Activated CD8-positive, alpha-beta memory T cell treated with anti-CD3 and anti-CD28 coated beads, Interleukin-2, amount 10 ng/mL, durations not matched to agents 7 days and 5 days (primary cell): ENCODE measurements at regions of chr2 and their contacts with region 1.

Region 1: GRCh38 chr2:7437716-7438632 is 520.8 kb downstream of the RNF144A start:
- DNase-seq: peak; percentile 70
- ATAC-seq: peak; percentile 48
- H3K4me3 Mint-ChIP-seq: peak overlapping the region; percentile 57
- H3K27ac Mint-ChIP-seq: peak overlapping the region; percentile 97
- H3K4me1 Mint-ChIP-seq: peaks cover 81% of the 10 kb centered on the region
- H3K27me3 Mint-ChIP-seq: no peaks in the 10 kb centered on the region

Region 2: DNA sequence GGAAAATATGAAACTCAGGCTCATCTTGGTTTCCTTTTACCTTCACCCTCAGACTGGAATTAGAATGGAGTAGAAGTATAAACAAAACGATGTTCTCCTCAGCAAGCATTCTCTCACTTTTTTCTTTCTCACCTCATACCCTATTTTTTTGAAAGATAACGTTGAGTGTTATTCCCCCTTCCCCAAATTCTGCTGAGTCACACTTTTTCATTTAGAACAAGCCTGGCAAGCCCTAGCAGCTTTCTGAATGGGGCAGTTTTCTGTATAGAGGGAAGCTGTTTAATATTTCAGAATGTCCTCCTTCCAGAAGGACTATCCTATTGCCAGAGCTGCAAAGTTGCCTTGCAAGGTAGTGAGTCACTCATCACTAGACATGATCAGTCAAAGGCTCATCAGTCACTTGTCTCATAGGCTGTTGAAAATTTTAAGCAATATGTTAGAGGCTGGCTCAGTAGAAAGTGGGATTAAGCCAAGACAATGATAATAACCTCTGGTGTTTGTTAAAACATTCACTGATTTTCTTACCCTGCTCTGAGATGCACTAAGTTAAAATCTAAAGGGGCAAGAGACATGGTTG is 104.7 kb before region 1 on chr2:
- CTCF ChIA-PET with region 1: no interaction called
- DNase-seq: no peak
- ATAC-seq: no peak
- H3K4me3 Mint-ChIP-seq: no peak overlapping the region
- H3K27ac Mint-ChIP-seq: no peak overlapping the region
- H3K4me1 Mint-ChIP-seq: no peaks in the 10 kb centered on the region
- H3K27me3 Mint-ChIP-seq: peaks cover 18% of the 10 kb centered on the region

Region 3: DNA sequence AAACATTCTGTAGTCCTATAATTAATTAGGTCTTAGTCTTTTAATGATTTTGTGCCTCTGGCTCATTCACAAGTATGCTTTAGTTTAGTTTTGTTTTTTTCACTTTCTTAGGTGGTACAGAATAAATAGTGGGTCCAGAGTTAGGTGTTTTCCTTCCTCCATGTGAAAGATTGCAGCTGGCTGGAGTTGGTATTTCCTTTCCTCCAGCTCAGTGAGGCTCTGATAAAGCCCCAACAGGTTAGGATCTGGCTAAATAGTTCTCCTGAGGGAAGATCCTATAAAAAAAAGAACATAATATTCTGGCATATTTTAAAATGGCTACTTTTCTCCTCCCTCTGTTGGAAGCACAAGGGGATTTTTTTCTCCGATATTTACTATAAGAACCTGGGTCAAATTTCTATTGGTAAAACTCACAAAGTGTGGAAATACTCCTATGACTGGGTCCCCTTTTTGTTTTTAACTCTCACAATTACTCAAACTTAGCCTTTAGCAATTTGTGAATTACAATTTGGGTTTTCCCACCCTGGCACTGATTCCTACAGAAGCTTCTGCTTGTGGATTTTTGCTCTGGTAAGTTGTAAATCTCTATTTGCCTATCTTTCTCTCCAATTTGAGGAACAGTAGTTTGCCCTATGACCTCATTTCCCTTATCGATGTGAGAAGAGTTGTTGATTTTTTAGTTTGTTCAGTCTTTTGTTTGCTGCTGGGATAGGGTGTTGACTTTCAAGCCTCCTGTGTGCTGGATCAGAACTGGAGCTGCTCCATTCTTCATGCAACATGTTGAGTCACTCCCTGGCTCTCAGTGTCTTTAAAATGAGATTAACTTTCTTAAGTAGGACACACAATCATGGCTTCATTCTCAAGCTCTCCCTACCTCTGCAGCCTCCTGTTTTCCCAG is 19.9 kb before region 1 on chr2:
- CTCF ChIA-PET with region 1: no interaction called
- DNase-seq: no peak
- ATAC-seq: no peak
- H3K4me3 Mint-ChIP-seq: no peak overlapping the region
- H3K27ac Mint-ChIP-seq: no peak overlapping the region
- H3K4me1 Mint-ChIP-seq: no peaks in the 10 kb centered on the region
- H3K27me3 Mint-ChIP-seq: peaks cover 17% of the 10 kb centered on the region

Region 4: DNA sequence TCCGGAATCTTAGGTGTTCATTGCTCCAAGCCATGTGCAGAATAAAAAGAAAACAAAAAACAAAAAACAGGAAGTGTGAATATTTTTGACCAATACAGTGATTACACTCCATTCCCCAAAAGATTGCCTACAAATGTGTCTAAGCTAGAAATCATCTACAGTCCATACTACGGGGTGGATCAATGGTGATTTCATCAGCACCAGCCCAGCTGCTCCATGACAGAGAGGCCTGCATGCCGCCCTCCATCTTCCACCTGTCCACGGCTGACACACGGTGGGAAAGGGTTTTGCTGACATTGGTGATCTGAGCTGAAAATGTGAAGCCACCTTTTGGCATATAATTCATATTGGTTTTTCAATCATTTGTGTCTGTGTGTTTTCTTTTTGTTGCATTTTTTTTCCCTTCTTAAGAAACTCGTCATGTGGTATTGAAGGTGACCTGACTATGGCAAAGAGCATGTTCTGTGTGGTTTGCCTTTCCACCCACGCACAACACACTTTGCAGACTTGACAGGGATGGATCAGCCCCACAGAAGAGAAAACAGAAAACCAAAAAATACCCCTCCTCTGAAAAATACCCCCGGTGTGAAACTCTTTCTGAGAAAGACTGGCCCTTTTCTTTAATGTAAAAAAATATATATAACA is 12.3 kb after region 1 on chr2:
- CTCF ChIA-PET with region 1: interaction called, 11 read pairs
- DNase-seq: peak; percentile 78
- ATAC-seq: peak; percentile 61
- H3K4me3 Mint-ChIP-seq: peak overlapping the region; percentile 44
- H3K27ac Mint-ChIP-seq: peak overlapping the region; percentile 93
- H3K4me1 Mint-ChIP-seq: peaks cover 82% of the 10 kb centered on the region
- H3K27me3 Mint-ChIP-seq: no peaks in the 10 kb centered on the region